MCF 10A (cell line): ENCODE measurements at regions of chr9 and their contacts with region 1.

Region 1: GRCh38 chr9:70013598-70014196 is 30.0 kb upstream of the MAMDC2 start:
- DNase-seq: peak; percentile 78
- H3K4me3 Mint-ChIP-seq: peak overlapping the region; percentile 5
- H3K27ac Mint-ChIP-seq: peak overlapping the region; percentile 65
- H3K4me1 Mint-ChIP-seq: peaks cover 11% of the 10 kb centered on the region
- H3K27me3 Mint-ChIP-seq: no peaks in the 10 kb centered on the region
- CTCF ChIP-seq: no peak

Region 2: GRCh38 chr9:70049236-70049635 is 35.5 kb after region 1 on chr9:
- CTCF ChIA-PET with region 1: interaction called, 3 read pairs
- POLR2A ChIA-PET with region 1: interaction called, 13 read pairs
- intact Hi-C with region 1: no loop called
- DNase-seq: peak; percentile 85
- H3K4me3 Mint-ChIP-seq: no peak overlapping the region
- H3K27ac Mint-ChIP-seq: peak overlapping the region; percentile 16
- H3K4me1 Mint-ChIP-seq: peaks cover 76% of the 10 kb centered on the region
- H3K27me3 Mint-ChIP-seq: no peaks in the 10 kb centered on the region
- CTCF ChIP-seq: no peak